ENCODE measurements at regions of chr11 and their contacts with region 1.

Region 1: DNA sequence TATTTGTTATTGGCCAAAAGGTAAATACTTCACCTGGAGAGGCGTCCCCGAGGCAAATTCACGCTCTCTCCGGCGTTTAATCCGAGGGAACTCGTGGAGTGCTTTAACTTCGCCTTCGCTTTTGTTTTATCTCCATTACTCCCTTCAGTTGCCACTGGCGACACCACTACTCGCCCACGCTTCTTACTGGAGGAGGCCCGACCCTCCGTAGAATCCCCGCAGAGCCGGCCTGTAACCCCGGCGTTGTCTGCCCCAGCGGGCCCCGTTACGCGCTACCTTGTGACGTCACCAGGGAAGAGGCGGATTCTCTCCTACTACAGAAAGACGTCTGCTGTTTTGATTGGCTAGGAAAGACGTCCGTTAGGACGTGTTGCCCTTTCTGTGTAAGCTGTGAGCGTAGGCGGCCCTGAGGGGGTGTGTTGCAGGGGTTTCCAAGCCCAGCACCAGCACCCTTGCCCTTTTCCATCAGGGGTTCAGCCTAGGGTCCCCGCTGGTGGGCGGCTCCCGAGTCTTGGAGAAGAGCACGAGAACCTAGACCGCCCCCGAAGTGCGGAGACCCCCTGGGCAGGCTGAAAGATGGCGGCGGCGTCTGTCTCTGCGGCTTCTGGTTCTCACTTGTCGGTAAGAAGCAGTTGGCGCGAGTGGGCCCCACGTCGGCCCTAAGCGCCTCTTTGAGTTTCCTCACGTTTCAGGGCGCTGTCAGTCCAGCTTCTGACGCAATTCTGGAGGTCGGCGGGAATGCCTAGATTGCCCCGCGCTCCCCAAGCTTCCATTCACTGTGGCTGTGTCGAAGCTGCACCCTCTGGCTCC is at the start of gene CEP57:
- DNase-seq: peak; percentile 85 to 96 (median 96)
- H3K4me3 ChIP-seq: peak within 1 kb of the TSS; percentile 97
- H3K4me3 Mint-ChIP-seq: peak within 1 kb of the TSS; percentile 98 to 100 (median 99)
- H3K27ac ChIP-seq: peak within 1 kb of the TSS; percentile 100
- H3K27ac Mint-ChIP-seq: peak within 1 kb of the TSS; percentile 100
- H3K4me1 ChIP-seq: peaks cover 33% of the 10 kb centered on the region
- H3K4me1 Mint-ChIP-seq: peaks cover 52 to 76% (median 72%) of the 10 kb centered on the region in 3 donors
- H3K27me3 ChIP-seq: no peaks in the 10 kb centered on the region
- H3K27me3 Mint-ChIP-seq: peaks cover 0 to 7% of the 10 kb centered on the region in 2 donors
- total RNA-seq, gene CEP57: 63.7 to 64.4 TPM

Region 2: GRCh38 chr11:95089620-95090542 is 700.4 kb before region 1 on chr11 and contains the start of gene ENDOD1:
- CTCF ChIA-PET with region 1: no interaction called
- POLR2A ChIA-PET with region 1: interaction called, 27 read pairs
- DNase-seq: peak; percentile 75 to 89 (median 84)
- H3K4me3 ChIP-seq: peak within 1 kb of the TSS; percentile 70
- H3K4me3 Mint-ChIP-seq: peak within 1 kb of the TSS; percentile 91 to 98 (median 93)
- H3K27ac ChIP-seq: peak within 1 kb of the TSS; percentile 78
- H3K27ac Mint-ChIP-seq: peak within 1 kb of the TSS; percentile 92 to 99 (median 98)
- H3K4me1 ChIP-seq: peaks cover 33% of the 10 kb centered on the region
- H3K4me1 Mint-ChIP-seq: peaks cover 46 to 58% (median 48%) of the 10 kb centered on the region in 3 donors
- H3K27me3 ChIP-seq: no peaks in the 10 kb centered on the region
- H3K27me3 Mint-ChIP-seq: no peaks in the 10 kb centered on the region
- total RNA-seq, gene ENDOD1: 29.6 to 30.1 TPM

Region 3: GRCh38 chr11:95923728-95924413 is 133.5 kb after region 1 on chr11 and contains the start of gene MTMR2:
- CTCF ChIA-PET with region 1: no interaction called
- POLR2A ChIA-PET with region 1: no interaction called
- DNase-seq: peak; percentile 27 to 63 (median 36)
- H3K4me3 ChIP-seq: peak within 1 kb of the TSS; percentile 78
- H3K4me3 Mint-ChIP-seq: peak within 1 kb of the TSS; percentile 85 to 100 (median 95)
- H3K27ac ChIP-seq: peak within 1 kb of the TSS; percentile 73
- H3K27ac Mint-ChIP-seq: peak within 1 kb of the TSS; percentile 82 to 100 (median 96)
- H3K4me1 ChIP-seq: peaks cover 23% of the 10 kb centered on the region
- H3K4me1 Mint-ChIP-seq: peaks cover 34 to 57% (median 51%) of the 10 kb centered on the region in 3 donors
- H3K27me3 ChIP-seq: no peaks in the 10 kb centered on the region
- H3K27me3 Mint-ChIP-seq: peaks cover 9 to 12% of the 10 kb centered on the region in 2 donors
- total RNA-seq, gene MTMR2: 46.4 to 50.1 TPM

Region 4: GRCh38 chr11:96389720-96390487 is 599.6 kb after region 1 on chr11 and contains the starts of genes CCDC82 and JRKL:
- CTCF ChIA-PET with region 1: interaction called, 4 read pairs
- POLR2A ChIA-PET with region 1: interaction called, 19 read pairs
- DNase-seq: peak; percentile 96 to 99 (median 97)
- H3K4me3 ChIP-seq: peak within 1 kb of the TSS; percentile 90
- H3K4me3 Mint-ChIP-seq: peak within 1 kb of the TSS; percentile 90 to 98 (median 95)
- H3K27ac ChIP-seq: peak within 1 kb of the TSS; percentile 85
- H3K27ac Mint-ChIP-seq: peak within 1 kb of the TSS; percentile 77 to 99 (median 94)
- H3K4me1 ChIP-seq: peaks cover 21% of the 10 kb centered on the region
- H3K4me1 Mint-ChIP-seq: peaks cover 35 to 68% (median 63%) of the 10 kb centered on the region in 3 donors
- H3K27me3 ChIP-seq: no peaks in the 10 kb centered on the region
- H3K27me3 Mint-ChIP-seq: no peaks in the 10 kb centered on the region
- total RNA-seq, gene CCDC82: 23.4 to 25.3 TPM
- total RNA-seq, gene JRKL: 9.7 to 10.4 TPM

Measured in CD8-positive, alpha-beta memory T cell (primary cell).